Caco-2 (cell line): ENCODE measurements at regions of chr2 and their contacts with region 1.

Region 1: DNA sequence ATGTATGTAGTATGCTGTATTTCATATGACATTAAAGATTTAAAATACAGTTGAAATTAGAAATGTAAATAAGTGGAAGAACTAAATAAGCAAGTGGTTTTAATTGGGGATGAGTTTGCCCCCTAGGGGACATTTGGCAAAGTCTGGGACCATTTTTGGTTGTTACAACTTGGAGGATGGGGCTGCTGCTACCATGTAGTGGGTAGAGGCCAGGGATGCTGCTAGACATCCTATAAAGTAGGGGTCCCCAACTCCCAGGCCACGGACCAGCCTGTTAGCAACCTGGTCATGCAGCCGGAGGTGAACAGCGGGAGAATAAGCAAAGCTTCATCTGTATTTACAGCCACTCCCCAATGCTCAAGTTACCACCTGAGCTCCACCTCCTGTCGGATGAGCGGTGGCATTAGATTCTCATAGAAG is 27.9 kb upstream of the ASNSD1 start:
- DNase-seq: peak in 1 of 2 experiments; percentile 33
- H3K4me3 ChIP-seq: no peak overlapping the region
- H3K4me3 Mint-ChIP-seq: no peak overlapping the region
- H3K27ac Mint-ChIP-seq: no peak overlapping the region
- H3K4me1 ChIP-seq: peaks cover 19% of the 10 kb centered on the region
- H3K4me1 Mint-ChIP-seq: peaks cover 12% of the 10 kb centered on the region
- H3K27me3 ChIP-seq: no peaks in the 10 kb centered on the region
- H3K27me3 Mint-ChIP-seq: no peaks in the 10 kb centered on the region
- CTCF ChIP-seq: peak; percentile 45 to 54

Region 2: DNA sequence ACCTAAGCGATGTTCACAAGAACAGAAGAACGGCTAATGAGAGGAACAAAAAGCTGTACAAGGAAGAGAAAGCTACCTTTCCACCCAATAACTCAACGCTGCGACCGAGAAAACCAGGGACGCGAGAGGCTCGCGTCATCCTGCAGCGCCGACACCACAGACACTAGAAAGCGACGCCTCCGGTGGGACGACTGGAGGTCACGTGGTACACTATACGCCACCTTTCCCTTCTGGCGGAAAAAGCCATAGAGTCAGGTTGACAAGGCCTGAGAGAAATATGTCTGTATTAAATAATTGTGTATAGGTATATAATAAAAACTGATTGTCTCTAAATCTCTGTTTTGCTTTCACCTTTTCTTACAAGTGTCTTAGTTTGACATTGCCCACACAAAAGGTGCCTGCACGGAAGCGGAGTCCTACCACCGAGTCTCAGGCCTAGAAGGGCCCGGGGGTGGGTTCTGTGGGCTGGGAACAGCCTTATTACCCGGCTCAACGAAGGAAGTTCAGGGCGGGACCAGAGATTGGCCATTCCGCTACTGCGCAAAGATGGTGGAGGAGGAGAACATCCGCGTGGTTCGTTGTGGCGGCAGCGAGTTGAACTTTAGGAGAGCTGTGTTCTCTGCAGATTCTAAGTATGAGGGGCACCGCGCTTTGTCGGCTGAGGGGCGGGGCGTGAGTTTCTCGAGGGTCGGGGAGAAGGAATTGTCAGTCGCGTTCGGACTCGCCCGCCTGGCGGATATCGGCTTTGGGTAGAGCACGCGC is 192.3 kb before region 1 on chr2 and contains the start of gene WDR75:
- CTCF ChIA-PET with region 1: no interaction called
- POLR2A ChIA-PET with region 1: no interaction called
- intact Hi-C with region 1: no loop called
- DNase-seq: peak; percentile 95
- H3K4me3 ChIP-seq: peak within 1 kb of the TSS; percentile 47
- H3K4me3 Mint-ChIP-seq: peak within 1 kb of the TSS; percentile 99
- H3K27ac Mint-ChIP-seq: peak within 1 kb of the TSS; percentile 98
- H3K4me1 ChIP-seq: 0 out of 2 replicates have a peak, but pooled peaks cover 4% of the 10 kb centered on the region
- H3K4me1 Mint-ChIP-seq: no peaks in the 10 kb centered on the region
- H3K27me3 ChIP-seq: no peaks in the 10 kb centered on the region
- H3K27me3 Mint-ChIP-seq: no peaks in the 10 kb centered on the region
- CTCF ChIP-seq: no peak
- total RNA-seq, gene WDR75: 50.2 and 57.7 TPM in 2 replicates

Region 3: DNA sequence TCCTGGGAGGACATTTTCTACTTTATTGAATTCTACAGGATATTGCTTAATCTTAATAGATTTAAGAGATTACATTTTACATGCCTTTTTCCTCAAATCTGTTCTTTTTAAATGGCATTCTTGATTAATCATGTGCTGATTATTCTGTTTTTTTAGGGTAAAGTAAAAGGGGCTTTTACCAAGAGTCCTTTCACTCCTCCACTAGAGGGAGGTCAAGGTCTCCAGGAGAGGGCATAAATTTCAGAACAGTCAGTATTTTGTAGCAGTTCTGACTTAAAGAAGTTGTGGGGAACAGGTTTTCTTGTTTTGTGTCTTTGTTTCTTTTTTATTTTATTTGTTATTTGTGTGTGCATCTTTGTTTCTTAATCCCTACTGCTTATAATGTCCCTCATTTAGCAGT is 166.7 kb before region 1 on chr2:
- CTCF ChIA-PET with region 1: no interaction called
- POLR2A ChIA-PET with region 1: no interaction called
- intact Hi-C with region 1: loop called (anchors 1 kb)
- DNase-seq: peak in 1 of 2 experiments; percentile 51
- H3K4me3 ChIP-seq: no peak overlapping the region
- H3K4me3 Mint-ChIP-seq: no peak overlapping the region
- H3K27ac Mint-ChIP-seq: no peak overlapping the region
- H3K4me1 ChIP-seq: no peaks in the 10 kb centered on the region
- H3K4me1 Mint-ChIP-seq: no peaks in the 10 kb centered on the region
- H3K27me3 ChIP-seq: no peaks in the 10 kb centered on the region
- H3K27me3 Mint-ChIP-seq: no peaks in the 10 kb centered on the region
- CTCF ChIP-seq: peak; percentile 89 to 90

Region 4: GRCh38 chr2:189498205-189498604 is 135.2 kb before region 1 on chr2:
- CTCF ChIA-PET with region 1: no interaction called
- POLR2A ChIA-PET with region 1: no interaction called
- intact Hi-C with region 1: loop called (anchors 1 kb)
- DNase-seq: peak in 1 of 2 experiments; percentile 18
- H3K4me3 ChIP-seq: no peak overlapping the region
- H3K4me3 Mint-ChIP-seq: no peak overlapping the region
- H3K27ac Mint-ChIP-seq: no peak overlapping the region
- H3K4me1 ChIP-seq: 0 out of 2 replicates have a peak, but pooled peaks cover 5% of the 10 kb centered on the region
- H3K4me1 Mint-ChIP-seq: no peaks in the 10 kb centered on the region
- H3K27me3 ChIP-seq: no peaks in the 10 kb centered on the region
- H3K27me3 Mint-ChIP-seq: no peaks in the 10 kb centered on the region
- CTCF ChIP-seq: peak in 1 of 2 experiments; percentile 29

Region 5: DNA sequence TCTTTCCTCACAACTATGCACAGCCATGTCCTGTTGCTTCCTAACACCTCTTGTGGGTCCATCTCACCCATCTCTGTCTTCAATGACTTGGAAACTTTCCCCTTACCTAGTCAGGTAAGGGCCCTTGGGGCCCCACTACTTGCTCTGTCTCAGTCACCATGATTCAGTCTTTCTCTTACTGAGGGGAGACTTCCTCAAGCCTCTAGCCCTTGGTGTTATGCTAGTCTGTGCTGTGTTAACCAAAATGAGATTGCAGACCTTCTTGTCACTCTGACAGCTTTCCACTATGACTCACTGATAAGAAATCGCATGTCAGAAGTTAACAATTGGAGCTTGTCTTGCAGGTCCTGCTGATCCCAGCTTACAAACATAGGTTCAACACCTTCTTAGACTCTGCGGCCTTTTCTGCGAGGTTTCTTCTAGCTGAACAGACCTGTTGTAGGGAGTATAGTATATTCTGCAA is 126.9 kb before region 1 on chr2:
- CTCF ChIA-PET with region 1: interaction called, 3 read pairs
- POLR2A ChIA-PET with region 1: no interaction called
- intact Hi-C with region 1: loop called (anchors 2 kb)
- DNase-seq: peak; percentile 66 to 69
- H3K4me3 ChIP-seq: no peak overlapping the region
- H3K4me3 Mint-ChIP-seq: peak overlapping the region; percentile 32
- H3K27ac Mint-ChIP-seq: peak overlapping the region; percentile 93
- H3K4me1 ChIP-seq: peaks cover 33% of the 10 kb centered on the region
- H3K4me1 Mint-ChIP-seq: peaks cover 25% of the 10 kb centered on the region
- H3K27me3 ChIP-seq: no peaks in the 10 kb centered on the region
- H3K27me3 Mint-ChIP-seq: no peaks in the 10 kb centered on the region
- CTCF ChIP-seq: no peak